IMR-90 (cell line): ENCODE measurements at regions of chr3 and their contacts with region 1.

Region 1: GRCh38 chr3:134106580-134106979 is 76.9 kb upstream of the SLCO2A1 start:
- DNase-seq: no peak
- ATAC-seq: no peak
- H3K4me3 ChIP-seq: no peak overlapping the region
- H3K27ac ChIP-seq: no peak overlapping the region
- H3K4me1 ChIP-seq: no peaks in the 10 kb centered on the region
- H3K27me3 ChIP-seq: no peaks in the 10 kb centered on the region
- CTCF ChIP-seq: no peak
- POLR2A ChIP-seq: no peak
- RAD21 ChIP-seq: no peak

Region 2: GRCh38 chr3:134186391-134186790 is 79.8 kb after region 1 on chr3:
- CTCF ChIA-PET with region 1: no interaction called
- POLR2A ChIA-PET with region 1: interaction called, 10 read pairs
- dilution Hi-C with region 1: no loop called
- in situ Hi-C with region 1: no loop called
- intact Hi-C with region 1: no loop called
- DNase-seq: no peak
- ATAC-seq: no peak
- H3K4me3 ChIP-seq: no peak overlapping the region
- H3K27ac ChIP-seq: no peak overlapping the region
- H3K4me1 ChIP-seq: peaks cover 4% of the 10 kb centered on the region
- H3K27me3 ChIP-seq: no peaks in the 10 kb centered on the region
- CTCF ChIP-seq: no peak
- POLR2A ChIP-seq: no peak
- RAD21 ChIP-seq: no peak